ENCODE measurements at regions of chr2 and their contacts with region 1.

Region 1: DNA sequence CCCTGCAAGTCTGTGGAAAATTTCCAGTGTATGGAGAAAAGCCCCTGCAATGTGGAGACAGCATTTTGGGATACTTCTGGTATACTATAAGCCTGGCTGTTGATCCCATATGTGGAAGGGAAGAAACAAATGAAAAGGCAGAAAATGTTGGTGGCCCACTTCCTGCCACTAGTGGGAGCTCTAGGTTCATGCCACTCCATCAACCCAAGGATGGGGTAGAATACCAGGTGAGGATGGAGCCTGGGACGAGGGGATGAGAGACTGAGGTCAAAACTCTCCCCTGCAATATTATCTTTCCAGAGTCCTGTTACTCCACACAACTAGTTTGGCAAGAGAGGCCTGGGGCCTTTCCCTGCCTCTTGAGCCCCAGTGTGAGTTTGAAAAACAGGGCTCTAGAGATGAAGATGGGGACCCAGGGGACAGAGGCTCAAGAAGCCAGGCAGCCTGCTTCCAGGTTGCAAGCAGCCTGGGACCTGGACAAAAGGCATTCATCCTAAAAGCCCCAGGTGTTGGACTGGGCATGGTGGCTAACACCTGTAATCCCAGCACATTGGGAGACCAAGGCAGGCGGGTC is 31.9 kb downstream of the BMP10 start:
- DNase-seq: peak; percentile 12
- H3K4me3 ChIP-seq: no peak overlapping the region
- H3K27ac ChIP-seq: no peak overlapping the region
- H3K4me1 ChIP-seq: no peaks in the 10 kb centered on the region
- H3K27me3 ChIP-seq: no peaks in the 10 kb centered on the region
- CTCF ChIP-seq: peak; percentile 78 to 91

Region 2: GRCh38 chr2:68225119-68225632 is 614.2 kb before region 1 on chr2:
- CTCF ChIA-PET with region 1: interaction called, 10 read pairs
- dilution Hi-C with region 1: no loop called
- in situ Hi-C with region 1: no loop called
- intact Hi-C with region 1: no loop called
- DNase-seq: peak; percentile 57
- H3K4me3 ChIP-seq: no peak overlapping the region
- H3K27ac ChIP-seq: no peak overlapping the region
- H3K4me1 ChIP-seq: no peaks in the 10 kb centered on the region
- H3K27me3 ChIP-seq: no peaks in the 10 kb centered on the region
- CTCF ChIP-seq: peak; percentile 22 to 57

Region 3: GRCh38 chr2:68925295-68925896 is 86.0 kb after region 1 on chr2:
- CTCF ChIA-PET with region 1: interaction called, 4 read pairs
- dilution Hi-C with region 1: no loop called
- in situ Hi-C with region 1: no loop called
- intact Hi-C with region 1: loop called (anchors 1 kb)
- DNase-seq: peak; percentile 55
- H3K4me3 ChIP-seq: no peak overlapping the region
- H3K27ac ChIP-seq: no peak overlapping the region
- H3K4me1 ChIP-seq: peaks cover 21% of the 10 kb centered on the region
- H3K27me3 ChIP-seq: no peaks in the 10 kb centered on the region
- CTCF ChIP-seq: peak; percentile 99